Activated naive CD4-positive, alpha-beta T cell treated with anti-CD3 and anti-CD28 coated beads, Interleukin-2, amount 10 ng/mL, durations not matched to agents 7 days and 5 days (primary cell): ENCODE measurements at regions of chr1 and their contacts with region 1.

Region 1: GRCh38 chr1:160837558-160838205 is 25.0 kb downstream of the CD244 start:
- DNase-seq: peak; percentile 93
- H3K4me3 Mint-ChIP-seq: peak overlapping the region; percentile 13
- H3K27ac Mint-ChIP-seq: peak overlapping the region; percentile 96
- H3K4me1 Mint-ChIP-seq: peaks cover 65% of the 10 kb centered on the region
- H3K27me3 Mint-ChIP-seq: peaks cover 12% of the 10 kb centered on the region

Region 2: GRCh38 chr1:160675641-160676410 is 161.9 kb before region 1 on chr1:
- CTCF ChIA-PET with region 1: interaction called, 16 read pairs
- DNase-seq: peak; percentile 85
- H3K4me3 Mint-ChIP-seq: no peak overlapping the region
- H3K27ac Mint-ChIP-seq: peak overlapping the region; percentile 79
- H3K4me1 Mint-ChIP-seq: peaks cover 28% of the 10 kb centered on the region
- H3K27me3 Mint-ChIP-seq: no peaks in the 10 kb centered on the region

Region 3: DNA sequence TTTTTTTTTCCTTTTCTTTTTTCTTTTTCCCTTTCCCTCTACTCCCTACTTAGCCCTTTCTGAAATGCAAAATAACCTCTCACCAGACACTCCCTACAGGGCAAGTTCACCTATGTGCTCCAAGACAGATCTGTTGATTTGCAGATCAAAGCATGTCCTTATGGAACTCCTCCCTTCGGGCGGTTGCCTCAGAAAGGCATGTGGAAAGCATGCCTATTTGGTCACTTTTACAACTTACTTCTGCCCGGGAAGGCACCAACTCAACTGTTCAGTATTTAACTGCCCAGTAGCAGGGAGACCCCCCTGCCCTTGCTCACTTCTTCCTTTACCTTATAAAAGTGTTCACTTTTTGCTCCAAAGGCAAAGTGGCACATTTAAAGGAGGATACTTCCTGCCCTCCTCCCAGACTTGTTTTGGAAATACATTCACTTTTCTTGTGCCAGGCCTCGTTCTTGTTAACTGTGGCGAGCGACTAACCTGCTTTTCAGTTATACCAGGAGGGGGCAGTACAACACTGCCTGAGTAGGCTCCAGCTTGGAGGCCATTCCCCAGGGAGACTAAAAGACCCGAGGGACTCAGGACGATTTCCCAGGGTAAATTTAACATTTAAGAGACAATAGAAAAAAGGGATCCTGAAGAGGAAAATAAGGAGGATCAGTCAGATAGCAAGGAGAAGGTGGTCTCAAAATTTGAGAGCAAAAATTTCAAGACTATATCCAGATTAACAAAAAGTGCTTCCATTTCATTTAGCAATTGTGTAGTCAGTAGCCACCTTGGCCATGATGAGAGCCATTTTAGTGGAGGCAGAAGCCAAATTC is 111.0 kb before region 1 on chr1:
- CTCF ChIA-PET with region 1: interaction called, 40 read pairs
- DNase-seq: peak; percentile 75
- H3K4me3 Mint-ChIP-seq: no peak overlapping the region
- H3K27ac Mint-ChIP-seq: no peak overlapping the region
- H3K4me1 Mint-ChIP-seq: peaks cover 22% of the 10 kb centered on the region
- H3K27me3 Mint-ChIP-seq: no peaks in the 10 kb centered on the region

Region 4: DNA sequence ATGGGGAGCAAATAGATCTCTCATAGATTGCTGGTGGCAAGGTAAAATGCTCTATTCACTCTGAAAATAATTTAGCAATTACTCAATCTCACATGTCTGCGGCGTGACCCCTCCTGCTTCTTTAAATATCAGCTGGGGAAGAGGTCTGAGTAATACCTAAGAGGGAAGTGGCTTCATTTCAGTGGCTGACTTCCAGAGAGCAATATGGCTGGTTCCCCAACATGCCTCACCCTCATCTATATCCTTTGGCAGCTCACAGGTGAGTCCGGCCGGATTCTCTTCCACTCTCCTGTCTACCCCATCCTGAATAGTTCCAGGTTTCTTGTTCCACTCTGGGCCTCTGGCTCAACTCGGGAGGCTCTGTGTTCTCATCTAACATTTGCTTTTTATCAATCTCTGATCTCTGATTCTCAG is 98.6 kb before region 1 on chr1 and contains the start of gene SLAMF7:
- CTCF ChIA-PET with region 1: no interaction called
- DNase-seq: no peak
- H3K4me3 Mint-ChIP-seq: peak within 1 kb of the TSS; percentile 65
- H3K27ac Mint-ChIP-seq: peak within 1 kb of the TSS; percentile 73
- H3K4me1 Mint-ChIP-seq: peaks cover 65% of the 10 kb centered on the region
- H3K27me3 Mint-ChIP-seq: no peaks in the 10 kb centered on the region

Region 5: GRCh38 chr1:160759705-160760104 is 78.0 kb before region 1 on chr1:
- CTCF ChIA-PET with region 1: no interaction called
- DNase-seq: no peak
- H3K4me3 Mint-ChIP-seq: no peak overlapping the region
- H3K27ac Mint-ChIP-seq: no peak overlapping the region
- H3K4me1 Mint-ChIP-seq: peaks cover 16% of the 10 kb centered on the region
- H3K27me3 Mint-ChIP-seq: no peaks in the 10 kb centered on the region

Region 6: DNA sequence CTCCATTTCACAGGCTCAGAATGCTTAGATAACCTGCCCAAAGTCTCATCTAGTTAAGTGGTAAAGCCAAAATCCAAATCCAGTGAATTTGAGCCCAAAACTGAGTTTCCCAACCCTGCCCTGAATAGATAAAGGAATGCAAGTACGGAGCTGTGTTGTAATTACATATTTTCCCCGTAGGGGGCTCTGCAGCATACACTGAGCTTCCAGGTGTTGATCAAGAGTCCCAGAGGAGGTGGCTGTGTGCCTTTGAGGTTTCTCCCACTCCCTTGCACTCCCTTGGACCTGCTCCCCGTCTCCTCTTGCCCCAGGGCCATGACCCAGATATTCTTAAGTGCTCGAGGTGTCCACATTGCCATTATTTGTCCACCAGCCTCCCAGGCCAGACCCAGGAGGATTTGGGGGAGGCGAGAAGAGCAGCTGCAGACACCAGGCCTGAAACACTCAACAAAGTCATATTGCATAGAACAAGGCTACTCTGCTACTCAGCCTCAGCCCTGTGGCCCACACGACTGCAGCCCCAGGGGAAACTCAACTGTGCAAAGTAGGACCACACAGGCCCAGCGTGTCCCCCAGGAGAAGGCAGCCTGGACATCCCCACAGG is 60.1 kb before region 1 on chr1:
- CTCF ChIA-PET with region 1: interaction called, 138 read pairs
- DNase-seq: peak; percentile 64
- H3K4me3 Mint-ChIP-seq: no peak overlapping the region
- H3K27ac Mint-ChIP-seq: peak overlapping the region; percentile 5
- H3K4me1 Mint-ChIP-seq: peaks cover 41% of the 10 kb centered on the region
- H3K27me3 Mint-ChIP-seq: no peaks in the 10 kb centered on the region

Region 7: DNA sequence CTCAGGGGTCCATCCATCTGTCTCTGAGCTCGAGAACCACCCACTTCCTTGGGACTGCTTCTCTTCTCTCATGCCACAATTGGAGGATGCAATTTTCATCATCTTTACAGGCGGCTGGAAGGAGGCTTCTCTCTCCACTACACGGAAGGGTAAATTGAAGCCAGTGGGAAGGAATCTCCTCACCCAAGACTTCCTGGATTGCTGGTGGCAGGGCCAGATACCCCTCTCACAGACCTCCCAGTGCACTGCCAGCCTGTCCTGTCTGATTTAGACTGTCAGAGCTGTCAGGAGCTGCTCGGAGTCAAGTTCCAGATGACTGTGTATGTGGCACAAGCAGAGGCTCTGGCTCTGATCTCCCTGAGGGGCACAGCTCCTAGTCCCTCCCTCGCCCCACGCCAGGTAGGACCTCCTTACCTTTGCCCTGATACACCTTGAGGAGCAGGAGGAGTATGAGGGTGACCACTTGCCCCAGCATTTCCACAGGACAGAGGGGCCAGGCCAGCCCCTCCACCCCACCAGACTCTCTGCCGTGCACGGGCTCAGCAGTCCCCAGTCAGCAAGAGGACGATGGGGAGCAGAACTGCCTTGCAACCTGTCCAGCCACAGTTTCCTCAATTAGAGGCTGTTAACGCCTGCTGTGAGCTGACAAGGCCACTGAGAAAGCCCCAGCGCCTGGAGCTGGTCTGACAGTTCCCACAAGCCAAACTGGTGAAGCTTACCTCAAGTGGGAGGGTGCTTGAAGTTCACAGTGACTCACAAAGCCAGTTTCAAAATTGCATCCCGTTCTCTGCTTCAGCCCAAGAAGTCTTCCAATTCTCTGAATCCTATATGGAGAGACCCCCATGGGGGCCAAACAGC is 24.8 kb after region 1 on chr1 and contains the start of gene CD244:
- CTCF ChIA-PET with region 1: interaction called, 23 read pairs
- DNase-seq: peak; percentile 44
- H3K4me3 Mint-ChIP-seq: no peak within 1 kb of the TSS
- H3K27ac Mint-ChIP-seq: no peak within 1 kb of the TSS
- H3K4me1 Mint-ChIP-seq: peaks cover 15% of the 10 kb centered on the region
- H3K27me3 Mint-ChIP-seq: peaks cover 20% of the 10 kb centered on the region

Region 8: DNA sequence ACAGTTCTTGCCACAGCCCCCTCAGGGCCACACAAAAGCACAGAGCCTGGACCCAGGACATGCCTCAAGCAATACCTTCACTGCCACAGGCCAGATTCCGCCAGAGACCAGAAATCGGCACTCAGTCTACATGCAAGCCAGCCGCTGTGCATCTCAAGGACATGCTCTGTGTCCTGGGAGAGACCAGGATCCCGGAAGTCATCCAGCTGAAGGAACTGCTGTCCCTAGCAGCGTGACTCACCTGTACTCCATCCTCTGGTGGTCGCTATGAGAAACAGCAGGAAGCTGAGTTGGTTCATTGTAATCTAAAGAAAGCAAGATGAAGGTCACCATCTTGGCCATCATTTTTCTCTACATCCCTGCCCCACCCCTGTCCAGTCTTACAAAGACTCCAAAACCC is 46.9 kb after region 1 on chr1:
- CTCF ChIA-PET with region 1: interaction called, 20 read pairs
- DNase-seq: no peak
- H3K4me3 Mint-ChIP-seq: no peak overlapping the region
- H3K27ac Mint-ChIP-seq: no peak overlapping the region
- H3K4me1 Mint-ChIP-seq: no peaks in the 10 kb centered on the region
- H3K27me3 Mint-ChIP-seq: peaks cover 20% of the 10 kb centered on the region

Region 9: DNA sequence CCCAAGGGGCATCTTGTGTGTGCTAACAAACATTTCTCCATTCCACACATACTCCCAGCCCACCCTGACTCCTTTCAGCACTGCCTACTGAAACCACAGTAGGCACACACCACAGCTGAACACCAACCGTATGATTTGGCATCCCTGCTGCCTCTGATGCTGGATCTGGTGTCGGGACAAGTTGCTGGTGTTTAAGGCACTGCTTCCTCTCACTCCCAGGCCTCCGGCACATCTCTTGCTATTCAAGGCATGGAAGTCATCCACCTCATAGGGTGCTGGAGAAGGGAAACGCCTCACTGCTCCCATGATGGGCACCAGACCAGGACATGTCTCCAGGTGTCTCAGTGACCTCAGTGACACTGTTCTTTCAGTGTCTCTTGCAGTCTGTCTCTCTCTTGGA is 119.3 kb after region 1 on chr1:
- CTCF ChIA-PET with region 1: interaction called, 288 read pairs
- DNase-seq: no peak
- H3K4me3 Mint-ChIP-seq: no peak overlapping the region
- H3K27ac Mint-ChIP-seq: no peak overlapping the region
- H3K4me1 Mint-ChIP-seq: peaks cover 7% of the 10 kb centered on the region
- H3K27me3 Mint-ChIP-seq: peaks cover 16% of the 10 kb centered on the region